ENCODE measurements at regions of chr7 and their contacts with region 1.

Region 1: DNA sequence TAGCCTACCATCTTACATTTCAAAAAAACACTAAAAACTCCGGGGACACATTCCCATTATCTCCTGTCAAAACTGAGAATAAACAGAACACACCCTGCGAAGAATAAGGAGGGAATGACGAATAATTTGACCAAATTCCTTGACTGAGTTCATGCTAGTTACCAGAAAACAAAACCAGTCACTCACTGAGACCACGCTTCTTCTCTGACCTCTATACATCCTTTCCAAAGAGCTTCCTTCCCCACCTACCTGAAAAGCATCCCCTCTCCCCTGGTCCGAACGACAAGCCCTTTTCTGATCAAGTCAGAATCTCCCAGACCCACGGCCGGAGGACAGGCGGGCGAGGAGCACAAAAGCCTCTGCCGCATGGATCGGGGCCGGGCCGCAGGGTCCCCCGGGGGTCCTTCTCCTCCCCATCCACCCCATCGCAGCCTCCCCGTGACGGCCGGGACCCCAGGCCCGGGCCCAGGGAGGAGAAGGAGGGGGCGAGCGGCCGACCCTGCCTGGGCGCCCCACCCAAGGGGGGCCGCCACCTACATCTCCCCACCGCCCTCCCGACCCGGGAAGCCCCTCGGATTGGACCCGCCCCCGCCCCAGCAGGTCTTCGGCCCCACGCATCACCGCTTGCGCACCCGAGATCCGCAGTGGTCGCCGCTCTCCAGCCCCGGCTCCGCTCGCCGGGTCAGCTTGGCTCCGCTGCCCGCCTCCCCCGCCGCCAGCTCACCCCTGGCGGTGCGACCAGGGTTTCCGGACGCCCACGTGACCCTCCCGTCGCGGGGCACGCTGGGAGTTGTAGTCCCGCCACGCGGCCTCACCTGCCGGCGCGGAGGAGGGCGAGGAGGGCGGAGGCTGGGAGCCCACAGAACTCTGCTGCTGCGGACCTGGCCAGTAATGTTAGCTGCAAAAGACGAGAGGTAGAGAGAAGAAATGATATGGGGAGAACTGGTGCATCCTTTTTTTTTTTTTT is at the start of gene SLC37A3:
- DNase-seq: peak; percentile 89 to 94
- H3K4me3 ChIP-seq: peak within 1 kb of the TSS; percentile 98
- H3K4me3 Mint-ChIP-seq: peak within 1 kb of the TSS; percentile 91
- H3K27ac Mint-ChIP-seq: peak within 1 kb of the TSS; percentile 83
- H3K4me1 ChIP-seq: no peaks in the 10 kb centered on the region
- H3K4me1 Mint-ChIP-seq: no peaks in the 10 kb centered on the region
- H3K27me3 ChIP-seq: no peaks in the 10 kb centered on the region
- H3K27me3 Mint-ChIP-seq: no peaks in the 10 kb centered on the region
- CTCF ChIP-seq: no peak
- total RNA-seq, gene SLC37A3: 40.6 and 46.4 TPM in 2 replicates

Region 2: GRCh38 chr7:139452958-139453672 is 945.0 kb before region 1 on chr7:
- CTCF ChIA-PET with region 1: no interaction called
- POLR2A ChIA-PET with region 1: interaction called, 10 read pairs
- intact Hi-C with region 1: no loop called
- DNase-seq: no peak
- H3K4me3 ChIP-seq: no peak overlapping the region
- H3K4me3 Mint-ChIP-seq: no peak overlapping the region
- H3K27ac Mint-ChIP-seq: no peak overlapping the region
- H3K4me1 ChIP-seq: no peaks in the 10 kb centered on the region
- H3K4me1 Mint-ChIP-seq: peaks cover 5% of the 10 kb centered on the region
- H3K27me3 ChIP-seq: no peaks in the 10 kb centered on the region
- H3K27me3 Mint-ChIP-seq: no peaks in the 10 kb centered on the region
- CTCF ChIP-seq: no peak

Region 3: DNA sequence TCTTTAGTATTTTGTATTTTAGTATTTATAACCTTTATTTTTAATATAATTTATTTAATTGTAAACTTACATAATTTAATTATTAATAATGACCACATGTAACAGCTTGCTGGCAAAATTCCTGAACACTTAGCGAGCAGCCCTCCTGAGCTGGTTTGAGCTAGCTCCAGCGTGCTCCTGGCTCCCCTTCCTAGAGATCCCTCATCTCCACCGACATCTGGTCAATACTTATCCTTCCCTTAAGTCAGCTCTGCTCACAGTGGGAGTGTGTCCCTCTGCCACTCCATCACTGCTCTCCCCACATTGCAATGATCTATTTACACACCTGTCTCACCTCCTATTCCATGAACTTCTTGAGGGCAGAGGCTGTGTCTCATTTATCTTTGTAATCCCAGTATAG is 589.6 kb before region 1 on chr7:
- CTCF ChIA-PET with region 1: no interaction called
- POLR2A ChIA-PET with region 1: no interaction called
- intact Hi-C with region 1: no loop called
- DNase-seq: no peak
- H3K4me3 ChIP-seq: no peak overlapping the region
- H3K4me3 Mint-ChIP-seq: no peak overlapping the region
- H3K27ac Mint-ChIP-seq: no peak overlapping the region
- H3K4me1 ChIP-seq: no peaks in the 10 kb centered on the region
- H3K4me1 Mint-ChIP-seq: no peaks in the 10 kb centered on the region
- H3K27me3 ChIP-seq: no peaks in the 10 kb centered on the region
- H3K27me3 Mint-ChIP-seq: peaks cover 5% of the 10 kb centered on the region
- CTCF ChIP-seq: no peak

Region 4: GRCh38 chr7:140349144-140349771 is 48.8 kb before region 1 on chr7:
- CTCF ChIA-PET with region 1: interaction called, 10 read pairs
- POLR2A ChIA-PET with region 1: no interaction called
- intact Hi-C with region 1: no loop called
- DNase-seq: no peak
- H3K4me3 ChIP-seq: no peak overlapping the region
- H3K4me3 Mint-ChIP-seq: no peak overlapping the region
- H3K27ac Mint-ChIP-seq: no peak overlapping the region
- H3K4me1 ChIP-seq: no peaks in the 10 kb centered on the region
- H3K4me1 Mint-ChIP-seq: no peaks in the 10 kb centered on the region
- H3K27me3 ChIP-seq: no peaks in the 10 kb centered on the region; the same call in 1 of the 2 replicates
- H3K27me3 Mint-ChIP-seq: no peaks in the 10 kb centered on the region
- CTCF ChIP-seq: no peak

Region 5: DNA sequence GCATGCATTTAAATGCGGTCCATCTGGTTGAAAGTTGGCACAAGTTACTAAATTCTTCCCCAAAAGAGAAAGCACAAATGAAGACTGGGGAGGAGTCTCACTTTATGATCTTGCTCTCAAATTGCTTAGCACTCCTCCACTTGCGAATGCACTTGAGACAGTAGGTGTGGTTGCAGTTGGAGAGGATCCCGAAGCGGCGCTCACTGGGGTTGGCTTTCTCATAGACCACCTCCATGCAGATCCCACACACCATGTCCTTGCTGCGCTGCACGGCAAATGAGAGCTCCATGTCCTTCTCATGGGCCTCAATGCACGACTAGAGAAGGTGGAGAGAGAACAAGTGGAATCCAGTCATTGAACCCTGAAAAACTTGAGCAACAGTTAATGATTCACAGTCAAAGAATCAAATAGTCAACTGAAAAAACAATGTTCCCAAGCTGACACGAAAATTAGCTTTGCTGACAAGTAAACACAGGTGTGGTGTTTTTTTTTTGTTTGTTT is 58.5 kb after region 1 on chr7:
- CTCF ChIA-PET with region 1: no interaction called
- POLR2A ChIA-PET with region 1: no interaction called
- intact Hi-C with region 1: no loop called
- DNase-seq: no peak
- H3K4me3 ChIP-seq: no peak overlapping the region
- H3K4me3 Mint-ChIP-seq: no peak overlapping the region
- H3K27ac Mint-ChIP-seq: no peak overlapping the region
- H3K4me1 ChIP-seq: peaks cover 20% of the 10 kb centered on the region
- H3K4me1 Mint-ChIP-seq: peaks cover 19% of the 10 kb centered on the region
- H3K27me3 ChIP-seq: no peaks in the 10 kb centered on the region
- H3K27me3 Mint-ChIP-seq: no peaks in the 10 kb centered on the region
- CTCF ChIP-seq: no peak

Region 6: DNA sequence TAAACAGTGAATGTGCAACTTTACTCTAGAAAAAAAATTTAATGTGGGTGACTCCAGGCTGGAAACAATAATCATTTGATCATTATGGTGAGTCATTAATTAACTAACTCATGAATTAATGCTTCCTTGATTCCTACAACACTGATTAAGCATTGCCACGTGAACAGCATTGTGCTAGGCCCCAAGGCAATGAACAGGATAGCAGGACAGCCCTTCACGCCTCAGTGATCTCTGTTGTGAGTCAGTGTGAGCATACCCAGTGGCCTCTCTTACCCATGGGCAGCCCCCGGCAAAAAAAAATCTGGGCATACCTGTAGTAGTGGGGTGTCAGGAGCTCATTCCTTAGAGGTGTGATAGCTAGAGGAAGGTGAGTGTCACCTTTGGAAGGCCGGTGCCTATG is 166.6 kb after region 1 on chr7:
- CTCF ChIA-PET with region 1: no interaction called
- POLR2A ChIA-PET with region 1: interaction called, 15 read pairs
- intact Hi-C with region 1: no loop called
- DNase-seq: no peak
- H3K4me3 ChIP-seq: no peak overlapping the region
- H3K4me3 Mint-ChIP-seq: no peak overlapping the region
- H3K27ac Mint-ChIP-seq: no peak overlapping the region
- H3K4me1 ChIP-seq: no peaks in the 10 kb centered on the region
- H3K4me1 Mint-ChIP-seq: no peaks in the 10 kb centered on the region
- H3K27me3 ChIP-seq: no peaks in the 10 kb centered on the region
- H3K27me3 Mint-ChIP-seq: no peaks in the 10 kb centered on the region
- CTCF ChIP-seq: no peak

Measured in Caco-2 (cell line).